ENCODE measurements at regions of chrX and their contacts with region 1.

Region 1: DNA sequence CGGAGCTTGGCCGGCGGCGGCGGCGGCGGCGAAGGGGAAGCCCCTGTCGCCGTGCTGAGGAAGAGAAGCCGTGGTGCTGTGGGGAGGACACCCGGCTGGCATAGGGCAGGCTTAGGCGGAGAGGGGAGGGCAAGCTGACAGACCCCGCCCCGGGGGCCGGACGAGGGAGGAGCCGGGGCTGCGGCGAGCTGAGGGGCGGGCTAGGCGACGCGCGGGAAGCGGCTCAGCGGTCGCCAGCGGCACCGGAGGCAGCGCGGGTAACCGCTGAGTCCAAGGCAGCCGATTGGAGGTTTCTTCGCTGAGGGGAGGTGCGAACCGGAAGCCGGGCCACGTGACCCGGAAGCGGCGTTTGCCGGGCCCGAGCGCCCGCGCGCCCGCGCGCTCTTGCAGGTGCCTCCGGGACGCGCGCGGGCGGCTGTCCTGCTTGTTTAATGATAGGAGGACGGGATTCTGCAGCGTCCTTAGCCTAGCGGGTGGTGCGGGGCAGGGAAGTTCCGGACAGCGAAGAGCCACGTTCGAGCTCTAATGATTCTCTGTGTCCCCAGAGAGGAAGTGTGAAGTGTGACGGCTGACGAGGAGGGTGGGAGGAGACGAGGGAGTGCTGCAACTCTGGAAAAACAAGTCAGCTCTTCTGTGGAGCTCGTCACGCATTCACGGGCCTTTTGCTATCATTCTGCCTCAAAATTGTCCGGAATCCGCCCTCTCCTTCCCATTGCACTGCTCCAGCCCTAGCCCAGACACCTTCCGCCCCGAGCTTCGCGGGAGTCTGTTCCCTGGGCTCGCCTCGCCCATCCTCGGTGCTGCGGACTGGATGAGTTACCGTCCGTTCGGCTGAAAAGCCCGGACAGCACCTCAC is at the start of gene AP1S2:
- DNase-seq: peak; percentile 85 to 99 (median 91)
- ATAC-seq: peak; percentile 96
- H3K4me3 ChIP-seq: peak within 1 kb of the TSS; percentile 60 to 69
- H3K4me3 Mint-ChIP-seq: peak within 1 kb of the TSS; percentile 94
- H3K27ac ChIP-seq: peak within 1 kb of the TSS; percentile 82 to 98
- H3K27ac Mint-ChIP-seq: peak within 1 kb of the TSS; percentile 99
- H3K4me1 ChIP-seq: no peaks in the 10 kb centered on the region
- H3K4me1 Mint-ChIP-seq: peaks cover 25% of the 10 kb centered on the region
- H3K27me3 ChIP-seq: no peaks in the 10 kb centered on the region
- H3K27me3 Mint-ChIP-seq: no peaks in the 10 kb centered on the region
- CTCF ChIP-seq: no peak
- total RNA-seq, gene AP1S2: 10.9 to 14.1 TPM

Region 2: GRCh38 chrX:15335135-15336022 is 519.6 kb before region 1 on chrX and contains the start of gene PIGA:
- CTCF ChIA-PET with region 1: no interaction called
- POLR2A ChIA-PET with region 1: no interaction called
- intact Hi-C with region 1: loop called (anchors 2 to 10 kb)
- DNase-seq: peak; percentile 82 to 96 (median 89)
- ATAC-seq: peak; percentile 90
- H3K4me3 ChIP-seq: peak within 1 kb of the TSS; percentile 85 to 91
- H3K4me3 Mint-ChIP-seq: peak within 1 kb of the TSS; percentile 93
- H3K27ac ChIP-seq: peak within 1 kb of the TSS; percentile 86 to 92
- H3K27ac Mint-ChIP-seq: peak within 1 kb of the TSS; percentile 97
- H3K4me1 ChIP-seq: peaks cover 8% of the 10 kb centered on the region
- H3K4me1 Mint-ChIP-seq: peaks cover 26% of the 10 kb centered on the region
- H3K27me3 ChIP-seq: no peaks in the 10 kb centered on the region
- H3K27me3 Mint-ChIP-seq: peaks cover 6% of the 10 kb centered on the region
- CTCF ChIP-seq: no peak
- total RNA-seq, gene PIGA: 135 to 143 TPM

Region 3: DNA sequence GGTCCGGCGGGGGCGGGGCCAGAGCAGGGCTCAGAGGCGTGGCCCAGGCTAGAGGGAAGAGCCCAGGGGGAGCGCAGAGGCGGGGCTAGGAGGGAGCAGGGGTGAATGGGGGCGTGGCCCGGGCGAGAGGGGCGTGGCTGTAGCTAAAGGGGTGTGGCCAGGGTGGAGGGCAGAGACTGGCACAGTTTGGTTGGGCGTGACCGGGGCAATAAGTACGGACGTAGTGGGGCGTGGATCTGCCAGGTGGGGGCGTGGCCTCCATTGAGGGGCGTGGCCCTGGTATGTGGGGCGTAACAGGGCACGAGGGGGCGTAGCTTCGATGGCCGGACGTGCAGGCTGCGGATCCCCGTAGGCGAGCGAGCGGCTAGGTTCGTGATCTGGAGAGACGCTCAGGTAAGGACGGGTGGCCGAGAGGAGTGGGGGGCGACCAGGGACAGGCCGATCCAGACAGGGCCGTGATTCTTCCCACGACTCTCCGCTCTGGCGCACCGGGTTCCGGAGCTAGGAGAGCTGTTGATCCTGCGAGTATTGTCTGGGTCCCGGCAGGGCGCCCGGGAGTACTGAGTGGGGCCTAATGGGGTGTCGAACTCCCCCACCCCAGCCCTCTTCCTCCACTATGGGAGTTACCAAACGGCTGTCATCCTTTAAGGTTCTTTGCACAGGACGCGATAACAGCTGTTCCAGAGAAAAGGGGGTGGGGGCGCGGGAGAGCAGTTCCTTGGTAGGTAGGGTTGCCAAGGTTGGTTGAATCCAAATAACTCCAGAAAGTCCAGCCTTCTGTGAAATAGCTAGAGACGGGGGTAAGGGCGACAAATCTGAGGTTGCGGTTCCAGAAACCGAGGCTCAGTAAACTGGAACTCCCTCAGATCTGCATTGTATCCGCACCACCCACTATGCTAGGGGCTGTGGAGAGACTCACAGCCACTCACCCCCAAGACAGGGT is 116.7 kb before region 1 on chrX and contains the start of gene CA5B:
- CTCF ChIA-PET with region 1: no interaction called
- POLR2A ChIA-PET with region 1: interaction called, 11 read pairs
- intact Hi-C with region 1: loop called (anchors 1 kb)
- DNase-seq: peak; percentile 93 to 100 (median 96)
- ATAC-seq: peak; percentile 96
- H3K4me3 ChIP-seq: peak within 1 kb of the TSS; percentile 84 to 85
- H3K4me3 Mint-ChIP-seq: peak within 1 kb of the TSS; percentile 94
- H3K27ac ChIP-seq: peak within 1 kb of the TSS; percentile 76 to 81
- H3K27ac Mint-ChIP-seq: peak within 1 kb of the TSS; percentile 92
- H3K4me1 ChIP-seq: peaks cover 23% of the 10 kb centered on the region
- H3K4me1 Mint-ChIP-seq: peaks cover 41% of the 10 kb centered on the region
- H3K27me3 ChIP-seq: no peaks in the 10 kb centered on the region
- H3K27me3 Mint-ChIP-seq: no peaks in the 10 kb centered on the region
- CTCF ChIP-seq: no peak
- total RNA-seq, gene CA5B: 33.9 to 35.2 TPM

Region 4: GRCh38 chrX:15789979-15790768 is 64.8 kb before region 1 on chrX and contains the start of gene ZRSR2:
- CTCF ChIA-PET with region 1: no interaction called
- POLR2A ChIA-PET with region 1: interaction called, 24 read pairs
- intact Hi-C with region 1: loop called (anchors 1 to 2 kb)
- DNase-seq: peak; percentile 68 to 94 (median 89)
- ATAC-seq: peak; percentile 92
- H3K4me3 ChIP-seq: peak within 1 kb of the TSS; percentile 78 to 85
- H3K4me3 Mint-ChIP-seq: no peak within 1 kb of the TSS
- H3K27ac ChIP-seq: peak within 1 kb of the TSS; percentile 89 to 92
- H3K27ac Mint-ChIP-seq: no peak within 1 kb of the TSS
- H3K4me1 ChIP-seq: peaks cover 18% of the 10 kb centered on the region
- H3K4me1 Mint-ChIP-seq: peaks cover 27% of the 10 kb centered on the region
- H3K27me3 ChIP-seq: no peaks in the 10 kb centered on the region
- H3K27me3 Mint-ChIP-seq: no peaks in the 10 kb centered on the region
- CTCF ChIP-seq: no peak
- total RNA-seq, gene ZRSR2: 21.1 to 21.2 TPM

Region 5: DNA sequence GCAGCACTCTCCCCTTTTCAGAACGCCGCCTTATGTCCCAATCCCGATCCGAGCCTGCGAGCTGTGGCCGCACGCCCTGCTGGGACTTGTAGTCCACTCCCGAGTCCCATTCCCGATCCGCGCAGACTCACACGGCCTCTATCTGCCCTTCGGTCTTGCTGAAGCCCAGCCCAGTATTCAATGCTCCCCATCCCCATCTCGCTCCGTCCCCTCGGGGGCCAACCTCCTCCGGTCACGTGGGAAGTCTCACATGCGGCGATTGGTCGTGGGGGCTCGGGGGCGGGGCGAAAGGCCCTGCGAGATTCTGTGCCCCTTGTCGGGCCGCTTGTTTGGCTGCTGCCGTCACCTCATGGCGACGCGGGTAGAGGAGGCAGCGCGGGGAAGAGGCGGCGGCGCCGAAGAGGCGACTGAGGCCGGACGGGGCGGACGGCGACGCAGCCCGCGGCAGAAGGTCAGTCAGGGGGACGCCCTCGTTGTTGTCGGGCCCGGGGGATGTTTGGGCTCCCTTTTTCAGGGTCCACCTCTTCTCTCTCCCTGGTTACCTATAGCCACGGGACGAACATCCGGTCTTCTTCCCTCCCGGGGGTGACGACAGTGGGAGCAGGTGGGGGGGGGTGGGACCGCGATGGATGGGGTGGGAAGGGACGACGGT is 931.3 kb after region 1 on chrX and contains the start of gene TXLNG:
- CTCF ChIA-PET with region 1: no interaction called
- POLR2A ChIA-PET with region 1: no interaction called
- intact Hi-C with region 1: loop called in 1 of 2 experiments (anchors 10 kb)
- DNase-seq: peak; percentile 83 to 98 (median 94)
- ATAC-seq: peak; percentile 91
- H3K4me3 ChIP-seq: peak within 1 kb of the TSS; percentile 54 to 68
- H3K4me3 Mint-ChIP-seq: peak within 1 kb of the TSS; percentile 96
- H3K27ac ChIP-seq: peak within 1 kb of the TSS; percentile 88 to 91
- H3K27ac Mint-ChIP-seq: peak within 1 kb of the TSS; percentile 87
- H3K4me1 ChIP-seq: peaks cover 4% of the 10 kb centered on the region
- H3K4me1 Mint-ChIP-seq: peaks cover 25% of the 10 kb centered on the region
- H3K27me3 ChIP-seq: no peaks in the 10 kb centered on the region
- H3K27me3 Mint-ChIP-seq: no peaks in the 10 kb centered on the region
- CTCF ChIP-seq: no peak
- total RNA-seq, gene TXLNG: 31.3 to 32.3 TPM

Region 6: DNA sequence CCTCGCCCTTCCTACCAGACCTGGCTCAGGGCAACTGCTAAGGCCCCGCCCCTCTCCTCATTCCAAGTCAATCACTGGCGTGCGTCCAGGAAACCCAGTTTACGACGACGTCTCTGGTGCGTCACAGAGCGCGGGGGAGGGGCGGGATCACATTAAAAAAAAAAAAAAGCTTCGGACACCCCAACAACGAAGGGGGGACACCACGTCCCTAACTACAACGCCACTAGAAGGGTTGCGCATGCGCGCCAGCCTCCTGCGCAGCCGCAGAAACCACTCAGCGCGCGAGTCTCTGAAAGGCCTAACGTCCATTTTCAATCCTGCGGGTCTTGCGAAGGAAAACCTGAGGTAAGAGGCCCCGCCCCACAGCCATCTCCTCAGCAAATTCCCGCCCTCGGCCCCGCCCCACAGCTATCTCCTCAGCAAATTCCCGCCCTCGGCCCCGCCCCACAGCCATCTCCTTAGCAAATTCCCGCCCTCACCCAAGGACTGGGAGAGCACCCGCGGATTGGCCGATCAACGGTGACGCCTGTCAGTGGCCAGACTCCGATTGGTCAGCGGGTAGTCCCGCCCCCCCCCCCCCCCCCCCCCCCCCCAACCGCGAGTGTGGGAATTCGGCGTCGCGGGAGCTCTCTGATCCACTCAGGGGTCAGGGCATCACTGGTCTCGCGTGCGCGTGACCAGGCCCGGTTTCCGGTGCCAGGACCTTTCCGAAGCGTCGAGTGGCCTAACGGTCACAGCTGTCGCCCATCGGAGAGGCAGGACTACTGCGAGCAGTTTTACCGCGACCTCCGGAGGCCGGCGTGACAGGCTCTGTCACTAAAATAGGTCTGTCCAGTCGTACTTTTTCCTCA is 1882.1 kb after region 1 on chrX and contains the start of gene SCML1:
- CTCF ChIA-PET with region 1: no interaction called
- POLR2A ChIA-PET with region 1: no interaction called
- intact Hi-C with region 1: loop called in 1 of 2 experiments (anchors 10 kb)
- DNase-seq: peak; percentile 64 to 90 (median 86)
- ATAC-seq: peak; percentile 62
- H3K4me3 ChIP-seq: peak within 1 kb of the TSS; percentile 51 to 92
- H3K4me3 Mint-ChIP-seq: peak within 1 kb of the TSS; percentile 87
- H3K27ac ChIP-seq: peak within 1 kb of the TSS; percentile 88 to 95
- H3K27ac Mint-ChIP-seq: peak within 1 kb of the TSS; percentile 91
- H3K4me1 ChIP-seq: peaks cover 9% of the 10 kb centered on the region
- H3K4me1 Mint-ChIP-seq: peaks cover 35% of the 10 kb centered on the region
- H3K27me3 ChIP-seq: no peaks in the 10 kb centered on the region
- H3K27me3 Mint-ChIP-seq: no peaks in the 10 kb centered on the region
- CTCF ChIP-seq: no peak
- total RNA-seq, gene SCML1: 50.6 to 52.2 TPM